ENCODE measurements at regions of chr1 and their contacts with region 1.

Region 1: GRCh38 chr1:115771847-115772457 is 3.4 kb upstream of the CASQ2 start:
- DNase-seq: peak; percentile 81
- H3K4me3 ChIP-seq: no peak overlapping the region
- H3K27ac ChIP-seq: no peak overlapping the region
- H3K4me1 ChIP-seq: no peaks in the 10 kb centered on the region
- H3K27me3 ChIP-seq: no peaks in the 10 kb centered on the region
- CTCF ChIP-seq: peak; percentile 29 to 87 (median 71)
- POLR2A ChIP-seq: no peak

Region 2: GRCh38 chr1:115138968-115139367 is 633.0 kb before region 1 on chr1:
- intact Hi-C with region 1: loop called (anchors 10 kb)
- DNase-seq: peak; percentile 87
- H3K4me3 ChIP-seq: no peak overlapping the region
- H3K27ac ChIP-seq: no peak overlapping the region
- H3K4me1 ChIP-seq: no peaks in the 10 kb centered on the region
- H3K27me3 ChIP-seq: no peaks in the 10 kb centered on the region
- CTCF ChIP-seq: peak; percentile 71 to 91 (median 84)
- POLR2A ChIP-seq: no peak

Region 3: DNA sequence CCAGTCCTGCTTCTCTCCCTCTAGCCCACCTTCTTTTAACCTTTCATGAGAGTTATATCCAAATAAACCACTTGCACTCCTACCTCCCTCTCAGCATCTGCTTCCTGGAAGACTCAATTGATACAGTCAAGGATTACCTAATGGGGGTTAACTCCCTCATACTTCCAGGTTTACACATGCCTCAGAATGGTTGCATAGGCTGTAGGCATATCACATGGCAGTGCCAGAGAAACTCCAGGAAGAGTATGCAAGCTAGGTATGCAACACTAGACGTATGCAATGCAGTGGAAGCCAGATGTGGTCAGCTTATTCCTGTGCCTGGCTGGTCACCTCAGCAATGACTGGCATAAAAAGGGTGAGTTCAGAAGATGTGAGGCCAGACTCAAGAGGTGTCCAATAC is 162.9 kb before region 1 on chr1:
- intact Hi-C with region 1: loop called (anchors 5 kb)
- DNase-seq: no peak
- H3K4me3 ChIP-seq: no peak overlapping the region
- H3K27ac ChIP-seq: no peak overlapping the region
- H3K4me1 ChIP-seq: no peaks in the 10 kb centered on the region
- H3K27me3 ChIP-seq: no peaks in the 10 kb centered on the region
- CTCF ChIP-seq: no peak
- POLR2A ChIP-seq: no peak

Region 4: DNA sequence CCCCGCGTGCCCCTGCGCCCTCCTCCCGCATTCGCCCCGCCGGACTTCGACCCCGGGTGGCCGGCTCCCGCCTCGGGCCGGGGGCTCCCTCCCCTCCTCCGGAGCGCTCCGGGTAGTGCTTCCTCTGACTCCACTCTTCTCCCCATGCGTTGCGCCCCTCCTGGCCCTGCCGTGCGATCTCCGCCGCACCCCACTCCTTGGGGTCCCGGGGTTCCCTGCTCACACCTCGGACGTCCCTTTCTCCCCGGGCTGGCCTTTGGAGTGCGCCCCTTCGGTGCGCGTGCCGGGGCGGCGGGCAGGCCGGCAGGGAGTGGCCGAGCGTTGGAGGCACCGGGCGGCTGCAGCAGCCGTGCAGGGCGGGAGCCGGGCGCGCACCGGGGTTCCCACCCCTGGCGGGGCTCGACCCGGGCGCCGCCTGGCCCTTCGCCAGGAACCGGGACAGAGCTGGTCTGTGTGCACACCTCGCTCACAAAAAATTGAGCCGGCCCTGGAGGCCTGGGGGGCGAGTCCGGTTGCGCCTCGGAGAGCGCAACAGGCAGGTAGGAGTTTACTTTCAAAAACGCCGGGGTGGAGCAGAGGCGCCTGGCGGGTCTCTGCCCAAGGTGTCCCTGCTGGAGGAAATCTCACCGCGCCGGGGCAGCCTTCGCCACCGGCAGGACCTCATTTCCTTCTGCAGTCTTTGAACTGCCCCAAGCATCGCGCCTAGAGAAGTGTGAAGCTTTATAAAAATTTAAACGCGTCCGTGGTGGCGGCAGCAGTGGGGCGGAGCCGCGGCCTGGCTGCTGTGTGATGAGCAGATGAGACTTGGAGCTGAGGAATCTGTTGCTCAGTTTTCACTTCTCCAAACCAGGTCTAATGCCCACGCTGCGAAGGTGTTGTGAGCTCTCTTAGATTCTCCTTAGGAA is 129.5 kb before region 1 on chr1:
- intact Hi-C with region 1: loop called (anchors 10 kb)
- DNase-seq: peak; percentile 57
- H3K4me3 ChIP-seq: peak overlapping the region; percentile 77 to 78
- H3K27ac ChIP-seq: peak overlapping the region; percentile 70 to 77
- H3K4me1 ChIP-seq: no peaks in the 10 kb centered on the region
- H3K27me3 ChIP-seq: no peaks in the 10 kb centered on the region
- CTCF ChIP-seq: peak in 2 of 4 experiments; percentile 30 to 33
- POLR2A ChIP-seq: no peak

Region 5: DNA sequence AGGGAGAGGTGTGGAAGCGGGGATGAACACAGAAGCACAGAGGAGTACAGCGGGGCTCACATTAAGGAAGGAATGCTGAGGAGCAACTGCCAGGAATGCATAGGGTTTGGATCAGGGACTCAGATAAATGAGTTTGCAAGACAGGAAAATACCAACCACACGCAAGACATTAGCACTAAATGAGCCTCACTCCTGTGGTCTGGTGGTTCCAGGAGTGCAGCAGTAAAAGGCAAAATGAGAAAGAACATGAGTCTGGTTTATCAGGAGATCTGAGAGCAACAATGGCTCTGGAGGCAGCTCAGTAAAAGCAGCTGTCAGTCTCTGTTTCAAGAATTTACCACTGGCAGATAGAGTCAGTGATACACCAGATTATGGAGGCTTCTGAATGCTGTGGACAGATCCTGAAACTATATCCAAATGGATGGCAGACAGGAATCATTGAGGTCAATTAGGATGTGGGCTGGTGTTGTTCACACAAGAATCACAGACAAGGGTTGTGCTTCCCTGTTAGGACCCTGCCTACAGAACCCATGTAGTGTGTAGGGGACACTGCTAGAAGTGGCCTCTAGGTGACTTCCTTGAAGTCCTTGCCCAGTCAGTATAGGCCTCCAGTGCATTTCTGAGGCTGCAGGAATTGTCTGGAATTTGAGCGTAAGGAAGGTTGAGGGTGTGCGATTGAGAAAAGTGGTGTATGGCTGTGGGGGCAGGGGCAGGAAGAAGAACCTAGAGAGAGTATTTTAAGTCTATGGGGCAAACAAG is 53.8 kb before region 1 on chr1:
- intact Hi-C with region 1: loop called (anchors 2 kb)
- DNase-seq: no peak
- H3K4me3 ChIP-seq: no peak overlapping the region
- H3K27ac ChIP-seq: no peak overlapping the region
- H3K4me1 ChIP-seq: peaks cover 8% of the 10 kb centered on the region
- H3K27me3 ChIP-seq: no peaks in the 10 kb centered on the region
- CTCF ChIP-seq: no peak
- POLR2A ChIP-seq: no peak

Measured in prostate gland (tissue), 2 donors.